CD4-positive, alpha-beta memory T cell (primary cell): ENCODE measurements at regions of chr9 and their contacts with region 1.

Region 1: DNA sequence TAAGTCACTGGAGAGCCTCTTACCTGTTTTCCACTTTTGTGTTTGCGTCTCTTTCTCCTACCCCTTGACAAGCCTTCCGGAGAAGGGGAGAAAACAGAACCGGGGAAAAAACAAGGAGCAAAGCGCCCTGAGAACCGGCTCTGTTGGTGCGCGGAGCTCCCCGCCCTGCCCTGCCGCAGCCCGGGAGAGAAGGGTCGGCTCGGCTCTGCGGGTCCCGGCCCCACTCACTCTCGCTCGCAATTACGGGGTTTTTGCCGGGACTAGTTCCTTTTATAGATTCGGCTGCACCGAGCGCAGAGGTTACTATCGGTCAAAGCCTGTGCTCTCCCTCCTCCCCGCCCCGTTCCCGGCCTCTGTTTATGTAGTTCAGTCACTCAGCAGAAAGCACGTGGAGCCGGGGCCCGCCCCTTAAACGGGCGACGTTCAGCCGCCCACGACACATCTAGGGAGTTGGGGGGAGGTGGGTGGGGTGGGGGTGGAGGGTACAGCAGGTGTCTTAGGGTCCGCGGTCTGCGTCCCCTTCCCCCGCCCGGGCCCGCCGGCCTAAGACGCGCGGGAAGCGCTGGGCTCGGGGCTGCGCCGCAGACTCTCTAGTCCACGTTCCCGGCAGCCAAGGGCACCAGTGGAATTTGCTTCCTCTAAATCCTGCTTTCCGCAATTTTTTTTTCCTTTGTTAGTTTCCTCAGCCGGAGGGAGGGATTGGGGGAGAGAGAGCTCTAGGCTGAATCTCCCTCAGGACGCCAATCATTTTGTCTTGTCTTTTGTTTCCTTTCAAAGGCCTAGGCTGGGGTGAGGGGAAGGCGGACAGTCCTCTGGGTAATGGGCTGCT is at the start of gene ABCA1:
- DNase-seq: peak; percentile 56 to 83 (median 65)
- H3K4me3 ChIP-seq: peak within 1 kb of the TSS; percentile 62 to 69
- H3K4me3 Mint-ChIP-seq: peak within 1 kb of the TSS; percentile 90 to 94 (median 91)
- H3K27ac ChIP-seq: no peak within 1 kb of the TSS
- H3K27ac Mint-ChIP-seq: peak within 1 kb of the TSS in 6 of 7 donors; percentile 60 to 92 (median 80)
- H3K4me1 ChIP-seq: peaks cover 23% of the 10 kb centered on the region
- H3K4me1 Mint-ChIP-seq: peaks cover 4 to 19% (median 10%) of the 10 kb centered on the region in 4 donors
- H3K27me3 ChIP-seq: no peaks in the 10 kb centered on the region
- H3K27me3 Mint-ChIP-seq: peaks cover 0 to 14% of the 10 kb centered on the region in 2 donors
- total RNA-seq, gene ABCA1: 0.80 to 1.2 TPM

Region 2: DNA sequence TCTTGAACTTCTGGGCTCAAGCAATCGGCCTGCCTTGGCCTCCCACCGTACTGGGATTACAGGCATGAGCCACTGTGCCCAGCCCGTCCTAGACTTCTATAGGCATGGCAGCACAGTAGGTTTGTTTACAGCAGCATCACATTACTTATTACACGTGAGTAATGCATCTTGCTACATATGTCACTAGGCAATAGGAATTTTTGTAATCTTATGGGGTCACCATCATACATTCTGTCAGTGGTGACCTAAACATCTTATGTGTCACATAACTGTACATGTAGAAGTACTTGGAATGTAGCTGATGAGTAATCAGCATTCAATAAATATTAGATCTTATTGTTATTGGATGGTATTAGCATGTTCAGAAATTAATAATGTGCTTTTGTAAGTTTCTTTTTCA is 22.7 kb after region 1 on chr9:
- CTCF ChIA-PET with region 1: no interaction called
- POLR2A ChIA-PET with region 1: no interaction called
- intact Hi-C with region 1: no loop called
- DNase-seq: no peak
- H3K4me3 ChIP-seq: no peak overlapping the region
- H3K4me3 Mint-ChIP-seq: no peak overlapping the region
- H3K27ac ChIP-seq: no peak overlapping the region
- H3K27ac Mint-ChIP-seq: no peak overlapping the region
- H3K4me1 ChIP-seq: no peaks in the 10 kb centered on the region
- H3K4me1 Mint-ChIP-seq: no peaks in the 10 kb centered on the region
- H3K27me3 ChIP-seq: no peaks in the 10 kb centered on the region
- H3K27me3 Mint-ChIP-seq: peaks cover 2 to 3% of the 10 kb centered on the region in 2 donors

Region 3: DNA sequence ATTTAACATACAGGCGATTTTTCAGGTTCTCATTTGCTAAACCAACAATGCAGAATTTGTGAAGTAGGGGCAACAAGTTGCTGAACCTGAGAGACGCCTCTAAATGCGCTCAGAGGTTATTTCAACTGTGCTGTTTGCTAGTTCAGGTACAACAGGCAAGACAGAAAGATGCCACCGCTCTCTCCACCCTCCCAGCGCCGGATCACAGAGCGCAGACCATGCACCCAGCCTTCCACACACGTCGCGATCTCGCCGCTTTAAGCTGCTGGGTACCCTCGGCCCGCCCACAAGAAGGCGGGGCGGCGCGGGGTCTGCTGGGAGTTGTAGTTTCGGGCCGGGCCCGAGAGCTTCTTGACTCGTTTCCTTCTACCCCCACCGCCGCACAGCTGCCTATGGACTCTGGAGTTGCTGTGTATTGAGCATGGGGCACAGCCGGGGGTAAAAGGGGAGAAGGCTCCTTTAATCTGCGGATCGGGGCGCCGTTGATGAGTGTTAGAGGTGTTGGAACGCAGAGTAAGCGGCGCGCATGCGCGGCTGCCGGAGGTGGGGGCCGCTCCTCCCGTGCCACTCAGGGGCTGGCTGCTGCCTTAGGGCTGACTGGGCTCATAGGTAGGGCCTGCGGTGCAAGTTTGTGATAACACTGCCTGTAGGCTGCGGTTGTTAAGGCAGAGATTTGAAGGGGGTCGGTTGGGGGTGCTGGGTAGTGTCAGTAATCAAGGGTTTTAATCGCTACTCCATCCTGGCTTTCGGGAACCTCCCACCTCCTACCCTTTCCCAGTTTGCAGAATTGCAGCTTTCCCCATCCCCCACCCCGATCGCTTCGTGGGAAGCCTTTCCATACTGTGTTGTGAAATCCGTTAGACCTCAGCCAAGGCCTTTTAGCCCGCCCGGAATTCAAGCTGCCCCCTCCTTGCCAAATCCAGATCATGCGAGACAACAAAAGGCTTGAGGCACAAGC is 40.2 kb after region 1 on chr9:
- CTCF ChIA-PET with region 1: interaction called, 5 read pairs
- POLR2A ChIA-PET with region 1: interaction called, 5 read pairs
- intact Hi-C with region 1: loop called (anchors 1 kb)
- DNase-seq: peak; percentile 87 to 91 (median 89)
- H3K4me3 ChIP-seq: peak overlapping the region; percentile 78 to 88
- H3K4me3 Mint-ChIP-seq: peak overlapping the region; percentile 89 to 96 (median 94)
- H3K27ac ChIP-seq: peak overlapping the region; percentile 58
- H3K27ac Mint-ChIP-seq: peak overlapping the region; percentile 73 to 95 (median 90)
- H3K4me1 ChIP-seq: peaks cover 14% of the 10 kb centered on the region
- H3K4me1 Mint-ChIP-seq: peaks cover 2 to 17% (median 11%) of the 10 kb centered on the region in 4 donors
- H3K27me3 ChIP-seq: no peaks in the 10 kb centered on the region
- H3K27me3 Mint-ChIP-seq: peaks cover 6 to 13% of the 10 kb centered on the region in 2 donors